Activated T-helper 2 cell treated with anti-CD3 and anti-CD28 coated beads, Interferon-gamma antibody, Interleukin-2, Interleukin-4, amounts not matched to agents 10 μg/mL and 5 μg/mL and 100 μg/mL, durations not matched to agents 14 hours and 24 hours and 36 hours (primary cell): ENCODE measurements at regions of chr2 and their contacts with region 1.

Region 1: GRCh38 chr2:36966370-36967235 is at the start of gene STRN:
- DNase-seq: peak; percentile 98
- H3K4me3 Mint-ChIP-seq: peak within 1 kb of the TSS; percentile 96
- H3K27ac Mint-ChIP-seq: peak within 1 kb of the TSS; percentile 96
- H3K4me1 Mint-ChIP-seq: peaks cover 33% of the 10 kb centered on the region
- H3K27me3 Mint-ChIP-seq: no peaks in the 10 kb centered on the region
- total RNA-seq, gene STRN: 27.7 and 29.7 TPM in 2 replicates

Region 2: DNA sequence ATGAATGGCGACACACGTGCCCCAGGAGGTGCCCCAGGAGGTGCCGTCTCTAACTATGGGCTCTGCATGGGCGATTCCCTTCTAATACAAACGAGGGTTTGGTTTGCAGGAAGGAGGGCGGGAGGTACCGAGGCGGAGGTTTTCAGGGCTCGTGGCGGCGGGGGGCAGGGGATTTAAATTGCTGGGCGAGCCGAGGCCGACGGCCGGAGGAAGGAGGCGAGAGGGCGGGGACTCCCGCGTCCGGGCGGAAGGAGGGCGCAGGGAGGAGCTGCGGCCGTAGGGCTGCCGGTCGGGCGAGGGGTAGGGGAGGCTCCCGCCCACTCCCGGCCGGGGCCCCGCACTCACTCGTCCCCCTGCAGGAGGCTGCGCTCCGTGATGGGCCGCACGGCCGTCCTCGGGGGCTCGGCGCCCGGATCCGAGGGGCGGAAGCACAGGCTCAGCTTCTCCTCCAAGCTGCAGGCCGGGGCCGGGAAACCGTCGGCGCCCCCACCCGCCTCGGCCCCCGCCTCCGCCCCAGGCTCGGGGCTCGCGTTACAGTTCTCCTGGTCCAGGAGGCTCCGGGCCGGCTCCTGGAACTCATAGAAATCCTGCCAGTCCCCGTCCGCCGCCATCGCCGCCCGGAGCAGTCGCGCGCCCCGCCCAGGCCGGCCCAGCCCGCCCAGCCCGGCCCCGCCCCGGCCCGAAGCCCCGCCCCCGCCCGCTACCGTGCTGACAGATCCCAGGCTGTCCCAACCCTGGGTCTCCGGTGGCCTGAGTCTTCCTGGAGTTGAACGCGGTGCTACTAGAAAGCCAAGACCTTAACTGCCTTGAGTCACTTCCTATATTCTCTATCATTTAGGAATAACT is 368.8 kb before region 1 on chr2 and contains the start of gene FEZ2:
- intact Hi-C with region 1: loop called (anchors 5 kb)
- DNase-seq: peak; percentile 72
- H3K4me3 Mint-ChIP-seq: peak within 1 kb of the TSS; percentile 91
- H3K27ac Mint-ChIP-seq: peak within 1 kb of the TSS; percentile 86
- H3K4me1 Mint-ChIP-seq: peaks cover 22% of the 10 kb centered on the region
- H3K27me3 Mint-ChIP-seq: no peaks in the 10 kb centered on the region
- total RNA-seq, gene FEZ2: 16.3 and 17.6 TPM in 2 replicates

Region 3: GRCh38 chr2:37083873-37084794 is 117.5 kb after region 1 on chr2 and contains the starts of genes GPATCH11 and HEATR5B:
- intact Hi-C with region 1: loop called (anchors 1 kb)
- DNase-seq: peak; percentile 90
- H3K4me3 Mint-ChIP-seq: no peak within 1 kb of the TSS
- H3K27ac Mint-ChIP-seq: no peak within 1 kb of the TSS
- H3K4me1 Mint-ChIP-seq: peaks cover 35% of the 10 kb centered on the region
- H3K27me3 Mint-ChIP-seq: no peaks in the 10 kb centered on the region
- total RNA-seq, gene GPATCH11: 14.4 and 14.9 TPM in 2 replicates
- total RNA-seq, gene HEATR5B: 15.3 and 16.8 TPM in 2 replicates

Region 4: GRCh38 chr2:37201766-37202165 is 235.2 kb after region 1 on chr2:
- intact Hi-C with region 1: loop called (anchors 1 kb)
- DNase-seq: no peak
- H3K4me3 Mint-ChIP-seq: no peak overlapping the region
- H3K27ac Mint-ChIP-seq: peak overlapping the region; percentile 63
- H3K4me1 Mint-ChIP-seq: peaks cover 33% of the 10 kb centered on the region
- H3K27me3 Mint-ChIP-seq: no peaks in the 10 kb centered on the region